ENCODE measurements at regions of chr15 and their contacts with region 1.

Region 1: GRCh38 chr15:91867581-91868026 is 14.1 kb downstream of the SLCO3A1 start:
- DNase-seq: peak; percentile 99
- H3K4me3 ChIP-seq: peak overlapping the region; percentile 10 to 52 (median 32)
- H3K27ac ChIP-seq: peak overlapping the region; percentile 99
- H3K4me1 ChIP-seq: peaks cover 49% of the 10 kb centered on the region
- H3K27me3 ChIP-seq: no peaks in the 10 kb centered on the region
- CTCF ChIP-seq: no peak

Region 2: GRCh38 chr15:91456251-91456738 is 411.3 kb before region 1 on chr15:
- CTCF ChIA-PET with region 1: no interaction called
- dilution Hi-C with region 1: no loop called
- in situ Hi-C with region 1: no loop called
- intact Hi-C with region 1: no loop called
- DNase-seq: peak; percentile 100
- H3K4me3 ChIP-seq: no peak overlapping the region
- H3K27ac ChIP-seq: peak overlapping the region; percentile 92
- H3K4me1 ChIP-seq: peaks cover 18% of the 10 kb centered on the region
- H3K27me3 ChIP-seq: no peaks in the 10 kb centered on the region
- CTCF ChIP-seq: no peak

Region 3: GRCh38 chr15:91885714-91886270 is 18.2 kb after region 1 on chr15:
- CTCF ChIA-PET with region 1: no interaction called
- dilution Hi-C with region 1: no loop called
- in situ Hi-C with region 1: no loop called
- intact Hi-C with region 1: loop called (anchors 1 kb)
- DNase-seq: no peak
- H3K4me3 ChIP-seq: no peak overlapping the region
- H3K27ac ChIP-seq: no peak overlapping the region
- H3K4me1 ChIP-seq: peaks cover 32% of the 10 kb centered on the region
- H3K27me3 ChIP-seq: no peaks in the 10 kb centered on the region
- CTCF ChIP-seq: peak in 1 of 2 donors; percentile 38

Region 4: DNA sequence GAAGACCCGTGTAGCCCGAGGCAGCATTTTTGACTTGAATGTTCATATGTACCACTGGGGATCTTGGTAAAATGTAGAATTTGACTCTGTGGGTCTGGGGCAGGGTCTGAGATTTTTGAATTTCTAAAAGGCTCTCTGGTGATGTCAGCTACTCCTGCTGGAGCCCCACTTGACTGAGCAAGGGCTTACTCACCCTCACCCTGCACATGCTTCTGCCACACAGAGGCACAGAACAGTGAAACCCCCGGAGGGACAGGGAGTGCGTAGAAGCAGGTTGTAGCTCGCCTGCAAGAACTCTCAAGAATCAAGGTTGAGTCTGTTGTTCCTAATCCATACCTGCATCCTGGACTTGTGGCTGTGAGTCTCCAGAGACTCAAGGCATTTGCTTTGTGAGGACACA is 27.0 kb after region 1 on chr15:
- CTCF ChIA-PET with region 1: no interaction called
- dilution Hi-C with region 1: no loop called
- in situ Hi-C with region 1: no loop called
- intact Hi-C with region 1: loop called (anchors 1 kb)
- DNase-seq: peak; percentile 98
- H3K4me3 ChIP-seq: no peak overlapping the region
- H3K27ac ChIP-seq: peak overlapping the region; percentile 91
- H3K4me1 ChIP-seq: peaks cover 63% of the 10 kb centered on the region
- H3K27me3 ChIP-seq: no peaks in the 10 kb centered on the region
- CTCF ChIP-seq: no peak

Region 5: DNA sequence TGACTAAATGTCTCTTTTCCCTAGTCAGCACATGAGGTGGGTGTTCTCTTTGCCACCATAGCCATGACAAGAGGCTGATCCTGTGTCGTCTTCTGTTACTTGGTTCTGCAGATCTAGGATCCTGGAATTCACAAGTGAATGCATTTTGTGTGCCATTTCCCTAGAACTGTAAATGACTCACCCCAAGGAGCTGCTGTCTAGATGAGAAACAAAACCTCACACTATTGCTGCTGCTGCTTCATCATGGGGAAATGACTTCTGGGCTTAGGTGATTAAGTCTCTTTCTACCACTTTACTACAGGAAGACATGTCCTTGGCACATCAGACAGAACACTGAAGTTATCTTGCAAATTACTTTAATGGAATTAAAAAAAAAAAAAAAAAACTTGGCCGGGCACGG is 40.8 kb after region 1 on chr15:
- CTCF ChIA-PET with region 1: no interaction called
- dilution Hi-C with region 1: no loop called
- in situ Hi-C with region 1: no loop called
- intact Hi-C with region 1: no loop called
- DNase-seq: peak; percentile 79
- H3K4me3 ChIP-seq: no peak overlapping the region
- H3K27ac ChIP-seq: no peak overlapping the region
- H3K4me1 ChIP-seq: peaks cover 8% of the 10 kb centered on the region
- H3K27me3 ChIP-seq: no peaks in the 10 kb centered on the region
- CTCF ChIP-seq: no peak

Region 6: DNA sequence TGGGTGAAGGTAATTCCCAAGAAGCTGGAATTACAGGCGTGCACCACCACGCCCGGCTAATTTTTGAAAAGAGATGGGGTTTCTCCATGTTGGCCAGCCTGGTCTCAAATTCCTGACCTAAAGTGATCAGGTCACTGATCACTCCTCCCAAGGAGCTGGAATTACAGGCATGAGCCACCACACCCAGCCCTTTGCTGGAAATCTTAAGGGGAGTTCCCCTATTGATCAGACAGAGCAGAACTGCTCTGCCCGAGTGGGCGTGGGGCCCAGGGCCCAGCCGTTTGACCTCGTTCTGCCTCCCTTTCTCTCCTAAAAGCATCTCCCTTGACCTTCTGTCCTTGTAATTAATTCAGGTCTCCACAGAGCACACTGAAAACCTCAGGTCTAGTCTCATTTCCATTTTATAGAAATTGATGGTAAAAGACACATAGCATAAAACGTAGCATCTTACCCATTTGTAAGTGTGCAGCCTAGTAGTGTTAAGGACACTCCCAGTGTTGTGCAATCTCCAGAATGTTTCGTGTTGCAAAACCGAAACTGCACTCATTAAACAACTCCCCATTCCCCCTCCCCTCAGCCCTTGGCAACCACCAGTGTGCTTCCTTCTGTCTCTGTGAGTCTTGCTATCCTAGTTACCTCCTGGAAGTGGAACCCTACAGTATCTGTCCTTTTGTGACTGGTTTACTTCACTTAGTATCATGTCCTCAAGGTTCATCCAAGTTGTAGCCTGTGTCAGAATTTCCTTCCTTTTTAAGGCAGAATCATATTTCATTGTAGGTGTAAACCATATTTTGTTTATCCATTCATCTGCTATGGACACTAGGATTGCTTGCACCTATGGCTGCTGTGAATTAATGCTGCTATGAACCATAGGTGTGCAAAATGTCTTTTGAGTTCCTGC is 75.3 kb after region 1 on chr15:
- CTCF ChIA-PET with region 1: interaction called, 11 read pairs
- dilution Hi-C with region 1: loop called (anchors 10 kb)
- in situ Hi-C with region 1: loop called in 1 of 2 experiments (anchors 5 kb)
- intact Hi-C with region 1: loop called (anchors 1 kb)
- DNase-seq: peak; percentile 99
- H3K4me3 ChIP-seq: peak overlapping the region in 1 of 3 experiments; percentile 5
- H3K27ac ChIP-seq: peak overlapping the region; percentile 96
- H3K4me1 ChIP-seq: peaks cover 58% of the 10 kb centered on the region
- H3K27me3 ChIP-seq: no peaks in the 10 kb centered on the region
- CTCF ChIP-seq: no peak

Region 7: DNA sequence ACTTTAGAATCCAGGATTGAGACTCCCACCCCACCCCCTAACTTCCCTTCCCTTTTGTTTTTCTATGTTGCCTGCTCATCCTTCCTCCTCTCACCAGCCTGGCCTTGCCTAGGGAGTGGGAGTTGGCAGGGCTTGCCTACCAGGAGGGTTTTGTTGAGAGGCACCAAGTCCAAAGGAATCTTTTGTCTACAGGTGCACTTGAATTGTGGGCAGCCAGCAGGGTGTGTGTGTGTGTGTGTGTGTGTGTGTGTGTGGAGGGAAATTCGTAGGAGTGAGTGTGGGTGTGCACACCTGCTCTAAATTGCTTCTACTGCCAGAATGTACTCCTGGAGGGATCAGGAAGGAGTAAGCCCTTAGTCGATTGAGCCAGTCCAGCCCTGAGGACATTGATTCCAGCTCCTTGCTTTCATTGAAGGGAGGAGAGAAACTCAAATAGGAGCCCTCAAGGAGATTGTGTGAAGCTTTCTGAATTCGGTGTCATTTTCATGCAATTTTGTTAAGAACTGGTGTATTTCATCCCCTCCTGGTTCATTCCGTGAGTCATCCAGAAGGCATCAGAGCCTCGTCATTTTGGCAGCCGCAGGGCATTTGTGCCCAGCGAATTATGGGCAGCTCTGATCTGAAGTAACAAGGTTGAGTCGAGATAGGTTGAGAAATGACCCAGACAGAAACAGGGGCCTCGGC is 98.0 kb after region 1 on chr15:
- CTCF ChIA-PET with region 1: no interaction called
- dilution Hi-C with region 1: loop called (anchors 5 kb)
- in situ Hi-C with region 1: no loop called
- intact Hi-C with region 1: no loop called
- DNase-seq: peak; percentile 97
- H3K4me3 ChIP-seq: peak overlapping the region in 1 of 3 experiments; percentile 12
- H3K27ac ChIP-seq: peak overlapping the region; percentile 90
- H3K4me1 ChIP-seq: peaks cover 44% of the 10 kb centered on the region
- H3K27me3 ChIP-seq: no peaks in the 10 kb centered on the region
- CTCF ChIP-seq: no peak

Measured in mammary epithelial cell (primary cell).